ENCODE measurements at regions of chr4 and their contacts with region 1.

Region 1: DNA sequence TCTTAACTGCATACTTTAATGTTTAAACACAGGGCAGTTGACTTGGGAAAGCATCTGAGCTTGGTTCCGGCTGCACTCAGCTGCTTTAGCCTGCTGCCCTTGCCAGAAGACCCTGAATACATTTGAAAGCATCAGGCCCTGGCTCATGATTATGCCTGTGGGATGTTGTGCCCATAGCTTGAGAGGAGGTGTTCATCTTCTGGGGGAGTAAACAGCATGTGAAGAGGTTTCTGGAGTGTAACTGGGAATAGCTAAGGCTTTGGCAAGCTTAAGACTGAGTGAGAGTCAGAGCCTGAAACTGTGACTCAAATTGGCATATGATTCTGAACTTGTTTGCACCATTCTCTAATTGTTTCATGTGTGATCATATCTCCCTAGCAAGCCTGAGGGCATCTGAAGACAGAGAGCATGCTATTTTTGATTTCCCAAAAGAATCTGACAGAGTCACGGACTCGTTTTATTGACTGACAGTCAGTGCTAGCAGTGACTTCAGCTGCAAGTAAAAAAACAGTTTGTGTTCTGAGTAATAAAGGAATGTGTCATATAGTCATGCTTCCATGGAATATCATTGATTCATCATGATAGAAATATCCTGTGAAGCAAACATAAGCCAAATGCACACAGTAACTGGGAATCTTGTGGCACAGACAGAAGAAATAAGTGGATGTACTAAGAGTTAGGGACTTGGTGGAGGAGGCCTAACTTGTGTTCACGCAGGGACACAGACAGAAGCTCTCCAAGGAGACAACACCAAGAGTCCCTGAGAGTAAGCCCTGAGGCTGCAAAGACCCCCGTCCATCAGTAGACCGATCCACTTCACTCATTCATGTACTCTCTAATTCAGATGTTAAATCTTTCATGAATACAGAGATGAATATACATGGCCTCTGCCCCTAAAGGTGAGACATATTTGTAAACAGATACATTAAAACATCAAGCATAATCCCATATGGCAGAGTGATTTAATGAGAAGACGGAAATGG is 100.7 kb downstream of the SYNPO2 start:
- DNase-seq: no peak
- ATAC-seq: peak; percentile 38 to 86

Region 2: DNA sequence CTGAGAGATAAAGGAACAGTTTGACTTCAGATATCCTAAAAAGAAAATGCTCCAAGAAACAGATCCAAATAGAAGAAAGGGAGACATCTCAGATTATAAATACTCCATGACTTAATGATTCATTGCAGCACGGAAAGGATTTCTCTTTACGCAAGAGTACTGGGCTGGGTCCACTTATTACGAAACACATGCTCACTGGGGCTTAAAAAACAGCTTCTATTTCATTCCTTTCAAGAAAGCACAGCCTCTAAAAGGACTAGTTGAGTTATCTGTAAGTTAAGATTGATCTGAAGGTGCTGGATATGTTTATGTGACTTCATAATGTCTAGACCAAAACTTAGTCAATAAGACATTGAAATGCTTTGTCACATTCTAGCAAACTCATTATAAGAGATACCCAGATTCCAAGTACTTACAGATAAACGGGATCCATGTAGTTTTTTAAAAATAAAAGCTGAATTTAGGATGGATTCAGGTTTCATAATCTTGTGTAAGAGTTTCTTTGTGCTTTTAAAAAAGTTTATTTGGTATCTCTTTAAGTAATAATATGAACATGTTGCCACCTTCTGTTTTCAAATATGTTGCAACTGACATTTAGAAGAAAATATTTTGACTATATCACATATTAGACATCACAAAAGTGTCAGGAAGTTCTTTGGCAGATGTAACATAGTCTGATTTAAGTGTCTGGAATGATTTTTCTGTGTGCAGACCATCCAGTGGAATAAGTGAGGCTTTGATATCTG is 36.7 kb after region 1 on chr4:
- intact Hi-C with region 1: loop called in 1 of 2 experiments (anchors 5 kb)
- DNase-seq: no peak
- ATAC-seq: peak; percentile 88 to 91

Region 3: DNA sequence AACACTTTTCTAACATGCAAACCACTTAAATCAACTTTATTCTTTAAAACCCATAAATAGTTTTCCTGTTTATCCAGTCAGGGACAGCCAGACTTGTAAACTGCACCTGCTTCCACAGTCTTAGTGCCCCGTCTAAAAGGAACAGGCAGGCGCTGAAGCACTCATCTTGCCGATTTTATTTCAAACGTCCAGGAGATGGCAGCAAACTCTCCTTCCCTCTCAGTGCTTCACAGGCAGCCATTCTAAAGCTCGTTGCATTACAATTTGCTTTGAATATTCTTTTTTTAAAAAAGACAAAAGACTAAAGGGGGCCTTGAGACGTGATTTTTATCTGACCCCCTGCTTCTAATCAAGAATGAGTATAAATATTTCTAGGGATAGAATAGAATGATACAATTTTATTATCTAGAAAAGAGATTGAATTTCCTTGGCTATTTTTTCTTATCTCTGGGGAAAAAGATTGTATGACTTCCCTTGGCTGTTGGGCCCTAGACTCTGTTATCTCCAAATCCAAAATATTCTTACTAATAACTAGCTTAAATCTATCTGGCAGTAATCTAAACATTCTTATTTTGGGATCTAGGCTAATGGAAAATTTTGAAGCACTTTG is 52.7 kb after region 1 on chr4:
- intact Hi-C with region 1: no loop called
- DNase-seq: peak; percentile 34
- ATAC-seq: peak; percentile 65 to 77